Activated naive CD4-positive, alpha-beta T cell treated with anti-CD3 and anti-CD28 coated beads for 36 hours (primary cell): ENCODE measurements at regions of chr11 and their contacts with region 1.

Region 1: GRCh38 chr11:74748211-74749127 is at the start of gene RNF169:
- DNase-seq: peak; percentile 94
- H3K4me3 Mint-ChIP-seq: peak within 1 kb of the TSS; percentile 83
- H3K27ac Mint-ChIP-seq: peak within 1 kb of the TSS; percentile 71
- H3K4me1 Mint-ChIP-seq: peaks cover 42% of the 10 kb centered on the region
- H3K27me3 Mint-ChIP-seq: no peaks in the 10 kb centered on the region
- total RNA-seq, gene RNF169: 15.8 to 16.0 TPM

Region 2: GRCh38 chr11:74592441-74593362 is 155.8 kb before region 1 on chr11 and contains the start of gene POLD3:
- CTCF ChIA-PET with region 1: no interaction called
- intact Hi-C with region 1: loop called (anchors 1 kb)
- DNase-seq: peak; percentile 98
- H3K4me3 Mint-ChIP-seq: peak within 1 kb of the TSS; percentile 89
- H3K27ac Mint-ChIP-seq: peak within 1 kb of the TSS; percentile 98
- H3K4me1 Mint-ChIP-seq: peaks cover 28% of the 10 kb centered on the region
- H3K27me3 Mint-ChIP-seq: no peaks in the 10 kb centered on the region
- total RNA-seq, gene POLD3: 84.8 to 91.9 TPM

Region 3: GRCh38 chr11:74769055-74769707 is 20.7 kb after region 1 on chr11:
- CTCF ChIA-PET with region 1: no interaction called
- intact Hi-C with region 1: loop called (anchors 1 kb)
- DNase-seq: no peak
- H3K4me3 Mint-ChIP-seq: no peak overlapping the region
- H3K27ac Mint-ChIP-seq: no peak overlapping the region
- H3K4me1 Mint-ChIP-seq: peaks cover 25% of the 10 kb centered on the region
- H3K27me3 Mint-ChIP-seq: no peaks in the 10 kb centered on the region

Region 4: GRCh38 chr11:74783241-74783871 is 34.9 kb after region 1 on chr11:
- CTCF ChIA-PET with region 1: no interaction called
- intact Hi-C with region 1: loop called (anchors 2 kb)
- DNase-seq: peak; percentile 18
- H3K4me3 Mint-ChIP-seq: no peak overlapping the region
- H3K27ac Mint-ChIP-seq: no peak overlapping the region
- H3K4me1 Mint-ChIP-seq: peaks cover 24% of the 10 kb centered on the region
- H3K27me3 Mint-ChIP-seq: no peaks in the 10 kb centered on the region